Activated CD4-positive, alpha-beta T cell treated with anti-CD3 and anti-CD28 coated beads for 36 hours (primary cell): ENCODE measurements at regions of chr1 and their contacts with region 1.

Region 1: DNA sequence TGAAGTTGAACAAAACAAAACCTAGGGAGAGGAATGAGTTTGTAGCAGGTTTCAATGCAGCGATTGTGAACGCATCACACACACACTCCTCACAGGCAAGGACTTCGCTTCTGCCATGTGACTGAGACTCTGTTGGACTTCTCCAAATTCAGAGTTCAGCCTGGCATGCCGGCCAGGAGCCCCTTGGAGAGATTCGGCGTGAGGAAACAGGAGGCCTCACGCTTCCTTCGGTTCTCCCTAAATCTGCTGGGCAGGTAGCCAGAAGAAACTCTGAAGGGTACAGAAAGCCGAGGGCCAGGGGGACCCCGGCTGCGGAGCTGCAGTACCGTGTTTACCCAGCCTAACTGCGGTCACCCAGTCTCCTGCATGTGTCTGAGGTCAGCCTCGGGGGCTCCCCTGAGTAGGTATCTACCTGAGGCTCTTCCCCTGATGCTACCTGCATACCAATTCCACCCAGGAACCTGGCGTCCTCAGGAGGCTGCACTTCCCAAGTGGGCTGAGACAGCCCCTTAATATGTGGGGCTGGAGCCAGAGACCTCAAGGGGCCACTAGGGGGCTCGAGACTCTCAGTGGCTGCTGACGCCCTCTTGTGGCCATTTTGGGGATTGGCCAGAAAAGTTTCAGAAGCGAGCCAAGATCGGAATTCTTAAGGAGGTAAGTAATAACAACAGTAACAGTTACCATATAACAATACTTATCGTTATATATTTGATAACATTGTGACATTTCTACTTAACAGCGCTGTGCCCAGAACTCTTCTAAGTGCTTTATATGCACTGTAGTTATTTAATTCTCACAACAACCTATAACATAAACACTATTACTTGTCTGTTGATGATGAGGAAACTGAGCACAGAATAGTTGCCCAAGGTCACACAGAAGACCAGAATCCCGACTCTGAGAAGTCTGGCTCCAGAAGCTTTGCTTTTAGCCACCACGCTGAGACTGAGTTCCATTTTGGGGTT is 2.7 kb upstream of the ANXA9 start:
- DNase-seq: peak; percentile 94
- ATAC-seq: peak; percentile 53
- H3K4me3 Mint-ChIP-seq: no peak overlapping the region
- H3K27ac Mint-ChIP-seq: peak overlapping the region; percentile 63
- H3K4me1 Mint-ChIP-seq: peaks cover 39% of the 10 kb centered on the region
- H3K27me3 Mint-ChIP-seq: no peaks in the 10 kb centered on the region

Region 2: DNA sequence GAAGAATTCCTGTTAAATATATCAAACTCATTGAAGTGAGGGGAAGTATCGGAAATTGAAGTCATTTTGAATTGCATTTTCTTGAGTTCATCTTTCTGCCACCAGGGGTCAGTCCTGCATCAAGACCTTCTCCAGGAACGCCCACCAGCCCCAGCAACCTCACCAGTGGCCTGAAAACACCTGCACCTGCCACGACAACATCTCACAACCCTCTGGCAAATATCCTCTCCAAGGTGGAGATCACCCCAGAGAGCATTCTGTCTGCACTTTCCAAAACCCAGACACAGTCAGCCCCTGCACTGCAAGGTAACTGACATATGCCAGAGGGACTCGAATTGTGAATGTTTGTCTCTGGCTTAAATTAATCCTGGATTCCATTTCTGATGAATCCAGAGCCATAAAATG is 515.0 kb before region 1 on chr1:
- CTCF ChIA-PET with region 1: no interaction called
- POLR2A ChIA-PET with region 1: no interaction called
- intact Hi-C with region 1: loop called in 1 of 2 experiments (anchors 10 kb)
- DNase-seq: peak; percentile 85
- ATAC-seq: peak; percentile 69
- H3K4me3 Mint-ChIP-seq: no peak overlapping the region
- H3K27ac Mint-ChIP-seq: no peak overlapping the region
- H3K4me1 Mint-ChIP-seq: peaks cover 4% of the 10 kb centered on the region
- H3K27me3 Mint-ChIP-seq: no peaks in the 10 kb centered on the region

Region 3: DNA sequence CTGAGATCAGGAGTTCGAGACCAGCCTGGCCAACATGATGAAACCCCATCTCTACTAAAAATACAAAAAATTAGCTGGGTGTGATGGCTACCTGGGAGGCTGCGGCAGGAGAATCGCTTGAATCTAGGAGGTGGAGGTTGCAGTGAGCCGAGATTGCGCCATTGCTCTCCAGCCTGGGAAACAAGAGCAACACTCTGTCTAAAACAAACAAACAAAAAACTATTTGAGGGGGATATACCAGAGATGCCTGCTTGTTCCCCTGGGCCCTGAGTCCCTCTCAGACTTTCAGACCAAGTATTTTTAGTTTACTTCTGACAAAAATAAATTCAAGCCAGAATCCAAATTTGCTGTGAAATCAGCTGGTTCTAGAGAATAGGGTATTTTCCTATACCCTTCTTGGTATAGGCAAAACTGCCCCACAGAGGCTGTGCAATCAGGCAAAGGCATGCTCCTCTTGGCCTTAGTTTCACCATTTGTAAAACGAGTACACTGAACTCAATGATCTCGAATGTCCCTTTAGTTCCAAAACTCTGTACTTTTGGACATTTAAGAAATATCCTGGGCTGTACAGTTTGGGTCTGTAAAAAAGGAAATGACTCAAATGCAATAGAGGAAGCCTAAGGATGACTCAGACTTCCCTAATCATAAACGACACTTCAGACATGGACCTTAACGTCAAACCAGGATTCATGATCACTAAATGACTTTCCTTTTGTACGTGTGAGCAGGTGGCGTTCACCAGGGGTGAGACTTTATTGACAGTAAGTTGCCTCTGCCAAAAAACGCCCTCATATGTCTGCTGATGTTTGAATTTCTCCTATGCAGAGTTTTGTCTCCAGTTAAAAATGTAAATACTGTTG is 366.1 kb before region 1 on chr1:
- CTCF ChIA-PET with region 1: no interaction called
- POLR2A ChIA-PET with region 1: no interaction called
- intact Hi-C with region 1: loop called in 1 of 2 experiments (anchors 5 kb)
- DNase-seq: peak; percentile 78
- ATAC-seq: peak; percentile 63
- H3K4me3 Mint-ChIP-seq: peak overlapping the region; percentile 60
- H3K27ac Mint-ChIP-seq: peak overlapping the region; percentile 90
- H3K4me1 Mint-ChIP-seq: peaks cover 67% of the 10 kb centered on the region
- H3K27me3 Mint-ChIP-seq: no peaks in the 10 kb centered on the region

Region 4: DNA sequence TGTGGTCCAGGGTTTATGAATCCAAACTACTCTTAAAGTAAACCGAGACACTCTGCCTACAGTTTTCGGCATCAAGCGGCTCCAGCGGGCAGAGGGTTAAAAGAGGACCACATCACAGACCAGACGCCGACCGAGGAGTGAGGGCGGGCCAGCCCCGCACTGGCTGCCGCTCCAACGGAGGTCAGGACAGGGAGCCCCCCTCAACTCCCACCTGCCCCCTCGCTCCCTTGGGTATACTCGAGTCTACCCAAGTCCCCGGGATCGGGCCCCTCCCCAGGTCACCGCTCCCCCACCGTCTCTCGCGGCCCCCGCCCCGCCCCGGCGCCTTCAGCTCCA is 103.3 kb before region 1 on chr1:
- CTCF ChIA-PET with region 1: interaction called, 4 read pairs
- POLR2A ChIA-PET with region 1: no interaction called
- intact Hi-C with region 1: loop called in 1 of 2 experiments (anchors 1 kb)
- DNase-seq: no peak
- ATAC-seq: peak; percentile 37
- H3K4me3 Mint-ChIP-seq: peak overlapping the region; percentile 88
- H3K27ac Mint-ChIP-seq: peak overlapping the region; percentile 95
- H3K4me1 Mint-ChIP-seq: peaks cover 25% of the 10 kb centered on the region
- H3K27me3 Mint-ChIP-seq: no peaks in the 10 kb centered on the region

Region 5: DNA sequence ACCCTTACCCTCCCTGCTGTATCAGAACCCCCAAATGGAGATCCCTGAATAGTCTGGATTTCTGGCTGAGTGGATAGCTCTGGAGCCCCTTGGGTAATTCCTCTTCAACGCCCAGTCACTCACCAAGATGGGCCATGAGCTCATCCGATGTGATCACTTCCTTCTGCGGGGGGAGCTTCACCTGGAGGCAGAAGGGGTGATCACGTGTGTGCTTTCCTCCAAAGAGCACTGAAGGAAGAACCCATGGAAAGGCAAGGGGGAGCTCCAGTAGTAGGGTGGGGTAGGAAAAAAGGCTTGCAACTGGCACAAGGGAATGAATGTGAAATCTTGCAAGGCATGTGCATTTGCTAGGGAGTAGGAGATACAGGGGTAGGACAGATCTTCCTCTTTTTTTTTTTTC is 22.2 kb after region 1 on chr1:
- CTCF ChIA-PET with region 1: interaction called, 90 read pairs
- POLR2A ChIA-PET with region 1: interaction called, 9 read pairs
- intact Hi-C with region 1: loop called in 1 of 2 experiments (anchors 1 kb)
- DNase-seq: no peak
- ATAC-seq: no peak
- H3K4me3 Mint-ChIP-seq: no peak overlapping the region
- H3K27ac Mint-ChIP-seq: no peak overlapping the region
- H3K4me1 Mint-ChIP-seq: peaks cover 61% of the 10 kb centered on the region
- H3K27me3 Mint-ChIP-seq: no peaks in the 10 kb centered on the region

Region 6: DNA sequence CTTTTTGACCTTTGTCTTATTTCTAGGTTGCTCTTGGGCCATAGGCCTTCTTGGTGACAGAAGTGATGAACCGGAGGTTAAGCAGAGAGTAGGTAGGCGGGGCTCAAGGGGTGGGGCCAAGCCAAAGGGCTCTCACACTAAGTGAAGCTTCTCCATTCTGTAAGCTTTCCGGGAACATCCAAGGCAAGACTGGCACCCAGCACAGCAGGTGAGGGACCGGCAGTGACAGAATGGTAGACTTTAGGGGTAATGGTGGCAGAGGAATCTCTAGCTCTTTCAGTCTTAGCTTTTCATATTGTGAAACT is 177.1 kb after region 1 on chr1 and contains the start of gene TNFAIP8L2:
- CTCF ChIA-PET with region 1: interaction called, 3 read pairs
- POLR2A ChIA-PET with region 1: no interaction called
- intact Hi-C with region 1: loop called in 1 of 2 experiments (anchors 1 kb)
- DNase-seq: peak; percentile 91
- ATAC-seq: peak; percentile 85
- H3K4me3 Mint-ChIP-seq: peak within 1 kb of the TSS; percentile 88
- H3K27ac Mint-ChIP-seq: peak within 1 kb of the TSS; percentile 99
- H3K4me1 Mint-ChIP-seq: peaks cover 44% of the 10 kb centered on the region
- H3K27me3 Mint-ChIP-seq: no peaks in the 10 kb centered on the region
- total RNA-seq, gene TNFAIP8L2: 18.4 to 19.2 TPM